ENCODE measurements at regions of chr1 and their contacts with region 1.

Region 1: GRCh38 chr1:100950781-100951180 is 54.9 kb downstream of the SLC30A7 start:
- DNase-seq: no peak
- ATAC-seq: no peak
- H3K4me3 ChIP-seq: no peak overlapping the region
- H3K27ac ChIP-seq: no peak overlapping the region
- H3K4me1 ChIP-seq: peaks cover 19% of the 10 kb centered on the region
- H3K27me3 ChIP-seq: no peaks in the 10 kb centered on the region
- CTCF ChIP-seq: no peak
- EP300 ChIP-seq: no peak
- POLR2A ChIP-seq: no peak
- RAD21 ChIP-seq: no peak

Region 2: DNA sequence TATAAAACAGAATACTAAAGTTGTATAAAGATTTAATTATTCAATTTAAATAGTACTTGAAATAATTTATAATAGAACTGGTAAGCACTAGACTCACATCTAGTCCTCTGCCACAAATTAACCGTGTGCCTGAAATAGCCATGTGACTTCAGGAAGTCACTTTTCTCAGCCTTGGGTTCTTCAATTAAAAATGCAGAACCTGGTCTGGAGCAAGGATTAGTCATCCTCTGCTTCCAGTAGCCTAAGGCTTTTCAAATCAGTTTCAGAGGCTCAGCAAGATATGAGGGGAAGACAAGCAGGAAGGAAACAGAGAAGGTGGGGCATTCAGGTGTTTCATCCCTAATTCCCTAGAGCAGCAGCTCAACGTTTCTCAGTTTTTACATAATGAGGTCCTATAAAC is 51.8 kb after region 1 on chr1:
- CTCF ChIA-PET with region 1: no interaction called
- POLR2A ChIA-PET with region 1: no interaction called
- in situ Hi-C with region 1: no loop called
- intact Hi-C with region 1: loop called (anchors 2 kb)
- DNase-seq: no peak
- ATAC-seq: no peak
- H3K4me3 ChIP-seq: no peak overlapping the region
- H3K27ac ChIP-seq: no peak overlapping the region
- H3K4me1 ChIP-seq: peaks cover 49% of the 10 kb centered on the region
- H3K27me3 ChIP-seq: no peaks in the 10 kb centered on the region
- CTCF ChIP-seq: no peak
- EP300 ChIP-seq: no peak
- POLR2A ChIP-seq: no peak
- RAD21 ChIP-seq: no peak

Region 3: DNA sequence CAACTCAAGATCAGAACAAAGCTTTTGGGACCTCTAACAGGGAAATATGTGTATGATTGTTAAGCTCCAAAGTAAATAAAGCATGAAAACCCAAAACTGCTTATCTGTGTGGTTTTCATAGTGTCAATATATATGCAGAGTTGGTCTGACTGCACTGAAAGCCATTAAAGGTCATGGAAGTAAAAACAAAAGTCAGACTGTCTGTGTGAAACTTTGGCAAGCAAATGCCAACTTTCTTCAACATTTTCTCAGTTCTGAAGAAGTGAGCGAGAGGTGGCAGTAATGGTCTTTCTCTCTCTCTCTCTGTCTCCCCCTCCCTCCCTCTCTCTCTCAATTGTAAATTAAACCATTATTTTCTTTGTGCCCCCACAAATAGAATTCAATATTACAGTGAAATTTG is 186.0 kb after region 1 on chr1:
- CTCF ChIA-PET with region 1: no interaction called
- POLR2A ChIA-PET with region 1: no interaction called
- in situ Hi-C with region 1: no loop called
- intact Hi-C with region 1: loop called (anchors 5 kb)
- DNase-seq: peak; percentile 73
- ATAC-seq: peak; percentile 85
- H3K4me3 ChIP-seq: peak overlapping the region in 1 of 3 experiments; percentile 30; a peak in 2 of 6 replicates
- H3K27ac ChIP-seq: peak overlapping the region; percentile 71
- H3K4me1 ChIP-seq: peaks cover 59% of the 10 kb centered on the region
- H3K27me3 ChIP-seq: 0 out of 5 replicates have a peak, but pooled peaks cover 0 to 1% of the 10 kb centered on the region in 2 experiments
- CTCF ChIP-seq: peak; percentile 64
- EP300 ChIP-seq: peak in 1 of 2 experiments; percentile 83; a peak in 2 of 4 replicates
- POLR2A ChIP-seq: no peak
- RAD21 ChIP-seq: no peak

Region 4: GRCh38 chr1:101278845-101279244 is 328.1 kb after region 1 on chr1:
- CTCF ChIA-PET with region 1: no interaction called
- POLR2A ChIA-PET with region 1: no interaction called
- in situ Hi-C with region 1: no loop called
- intact Hi-C with region 1: no loop called
- DNase-seq: no peak
- ATAC-seq: no peak
- H3K4me3 ChIP-seq: no peak overlapping the region
- H3K27ac ChIP-seq: no peak overlapping the region
- H3K4me1 ChIP-seq: peaks cover 26% of the 10 kb centered on the region
- H3K27me3 ChIP-seq: no peaks in the 10 kb centered on the region; a peak in 1 of 5 replicates
- CTCF ChIP-seq: no peak
- EP300 ChIP-seq: no peak
- POLR2A ChIP-seq: no peak
- RAD21 ChIP-seq: no peak